ENCODE measurements at regions of chr7 and their contacts with region 1.

Region 1: GRCh38 chr7:100586266-100587025 is at the start of gene FBXO24:
- DNase-seq: peak; percentile 99 to 100
- ATAC-seq: peak; percentile 78 to 94 (median 84)
- H3K4me3 ChIP-seq: peak within 1 kb of the TSS; percentile 97
- H3K4me3 Mint-ChIP-seq: peak within 1 kb of the TSS; percentile 97
- H3K27ac ChIP-seq: peak within 1 kb of the TSS; percentile 92
- H3K27ac Mint-ChIP-seq: peak within 1 kb of the TSS; percentile 89 to 92
- H3K4me1 ChIP-seq: peaks cover 45% of the 10 kb centered on the region
- H3K4me1 Mint-ChIP-seq: peaks cover 19 to 34% of the 10 kb centered on the region in 2 donors
- H3K27me3 ChIP-seq: peaks cover 3% of the 10 kb centered on the region
- H3K27me3 Mint-ChIP-seq: peaks cover 7 to 14% of the 10 kb centered on the region in 2 donors
- CTCF ChIP-seq: no peak
- total RNA-seq, gene FBXO24: 0.45 to 0.94 (median 0.88) TPM

Region 2: GRCh38 chr7:100396421-100396982 is 189.9 kb before region 1 on chr7:
- intact Hi-C with region 1: no loop called
- DNase-seq: peak in 1 of 2 donors; percentile 70
- ATAC-seq: peak; percentile 90 to 94 (median 91)
- H3K4me3 ChIP-seq: no peak overlapping the region
- H3K4me3 Mint-ChIP-seq: peak overlapping the region; percentile 93
- H3K27ac ChIP-seq: peak overlapping the region; percentile 65
- H3K27ac Mint-ChIP-seq: peak overlapping the region; percentile 94 to 98
- H3K4me1 ChIP-seq: peaks cover 22% of the 10 kb centered on the region
- H3K4me1 Mint-ChIP-seq: peaks cover 22 to 28% of the 10 kb centered on the region in 2 donors
- H3K27me3 ChIP-seq: no peaks in the 10 kb centered on the region
- H3K27me3 Mint-ChIP-seq: no peaks in the 10 kb centered on the region
- CTCF ChIP-seq: no peak

Region 3: DNA sequence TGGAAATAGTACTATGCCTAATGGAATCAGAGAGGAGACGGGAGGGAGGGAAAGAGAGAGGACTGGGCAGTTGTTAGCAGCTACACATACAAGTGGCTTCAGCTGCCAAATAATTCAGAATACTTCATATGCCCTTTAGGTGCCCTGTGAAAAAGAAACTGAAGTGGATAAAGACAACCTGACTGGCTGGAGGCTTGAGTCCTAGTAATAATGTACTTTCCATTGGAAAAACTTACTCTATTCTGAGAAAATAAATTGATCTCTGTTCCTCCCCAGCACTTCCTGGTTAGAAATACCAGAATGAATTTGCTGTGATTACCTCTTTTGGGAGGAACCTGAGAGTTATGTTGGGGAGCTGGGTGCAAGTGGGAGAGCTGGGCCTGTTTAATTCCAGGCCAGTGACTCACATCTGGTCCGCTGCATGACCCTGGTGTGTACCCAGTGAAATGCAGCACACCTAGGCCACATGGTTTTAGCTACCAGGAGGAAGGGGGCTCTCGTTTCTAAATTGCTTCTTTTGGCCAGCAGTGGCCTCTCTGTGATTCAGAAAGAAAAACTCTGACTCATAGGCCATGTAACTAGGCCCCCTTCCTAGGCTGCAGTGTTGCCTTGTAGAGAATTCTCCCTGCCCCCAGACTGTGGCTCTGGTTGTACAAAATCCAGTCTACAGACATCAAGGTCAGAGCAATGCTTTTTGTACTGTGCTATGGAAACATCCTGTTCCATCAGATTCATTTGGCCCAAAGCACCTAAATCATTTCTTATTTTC is 40.9 kb before region 1 on chr7:
- intact Hi-C with region 1: loop called (anchors 5 kb)
- DNase-seq: peak in 1 of 2 donors; percentile 59
- ATAC-seq: peak; percentile 28 to 72 (median 55)
- H3K4me3 ChIP-seq: no peak overlapping the region
- H3K4me3 Mint-ChIP-seq: peak overlapping the region; percentile 88
- H3K27ac ChIP-seq: peak overlapping the region; percentile 76
- H3K27ac Mint-ChIP-seq: peak overlapping the region; percentile 94 to 95
- H3K4me1 ChIP-seq: peaks cover 80% of the 10 kb centered on the region
- H3K4me1 Mint-ChIP-seq: peaks cover 80 to 85% of the 10 kb centered on the region in 2 donors
- H3K27me3 ChIP-seq: no peaks in the 10 kb centered on the region
- H3K27me3 Mint-ChIP-seq: no peaks in the 10 kb centered on the region
- CTCF ChIP-seq: no peak

Region 4: GRCh38 chr7:100568896-100569844 is 17.3 kb before region 1 on chr7:
- intact Hi-C with region 1: no loop called
- DNase-seq: peak; percentile 43 to 72
- ATAC-seq: peak; percentile 27 to 31 (median 28)
- H3K4me3 ChIP-seq: peak overlapping the region; percentile 33
- H3K4me3 Mint-ChIP-seq: peak overlapping the region; percentile 28
- H3K27ac ChIP-seq: peak overlapping the region; percentile 34
- H3K27ac Mint-ChIP-seq: peak overlapping the region; percentile 58 to 62
- H3K4me1 ChIP-seq: peaks cover 42% of the 10 kb centered on the region
- H3K4me1 Mint-ChIP-seq: peaks cover 10 to 40% of the 10 kb centered on the region in 2 donors
- H3K27me3 ChIP-seq: no peaks in the 10 kb centered on the region
- H3K27me3 Mint-ChIP-seq: no peaks in the 10 kb centered on the region
- CTCF ChIP-seq: no peak

Region 5: GRCh38 chr7:100604028-100604975 is 17.9 kb after region 1 on chr7:
- intact Hi-C with region 1: loop called (anchors 1 kb)
- DNase-seq: peak; percentile 77 to 84
- ATAC-seq: peak; percentile 77 to 82 (median 78)
- H3K4me3 ChIP-seq: peak overlapping the region; percentile 59
- H3K4me3 Mint-ChIP-seq: peak overlapping the region; percentile 94
- H3K27ac ChIP-seq: peak overlapping the region; percentile 86
- H3K27ac Mint-ChIP-seq: peak overlapping the region; percentile 89 to 94
- H3K4me1 ChIP-seq: peaks cover 29% of the 10 kb centered on the region
- H3K4me1 Mint-ChIP-seq: peaks cover 16 to 23% of the 10 kb centered on the region in 2 donors
- H3K27me3 ChIP-seq: no peaks in the 10 kb centered on the region
- H3K27me3 Mint-ChIP-seq: no peaks in the 10 kb centered on the region
- CTCF ChIP-seq: peak; percentile 69

Region 6: DNA sequence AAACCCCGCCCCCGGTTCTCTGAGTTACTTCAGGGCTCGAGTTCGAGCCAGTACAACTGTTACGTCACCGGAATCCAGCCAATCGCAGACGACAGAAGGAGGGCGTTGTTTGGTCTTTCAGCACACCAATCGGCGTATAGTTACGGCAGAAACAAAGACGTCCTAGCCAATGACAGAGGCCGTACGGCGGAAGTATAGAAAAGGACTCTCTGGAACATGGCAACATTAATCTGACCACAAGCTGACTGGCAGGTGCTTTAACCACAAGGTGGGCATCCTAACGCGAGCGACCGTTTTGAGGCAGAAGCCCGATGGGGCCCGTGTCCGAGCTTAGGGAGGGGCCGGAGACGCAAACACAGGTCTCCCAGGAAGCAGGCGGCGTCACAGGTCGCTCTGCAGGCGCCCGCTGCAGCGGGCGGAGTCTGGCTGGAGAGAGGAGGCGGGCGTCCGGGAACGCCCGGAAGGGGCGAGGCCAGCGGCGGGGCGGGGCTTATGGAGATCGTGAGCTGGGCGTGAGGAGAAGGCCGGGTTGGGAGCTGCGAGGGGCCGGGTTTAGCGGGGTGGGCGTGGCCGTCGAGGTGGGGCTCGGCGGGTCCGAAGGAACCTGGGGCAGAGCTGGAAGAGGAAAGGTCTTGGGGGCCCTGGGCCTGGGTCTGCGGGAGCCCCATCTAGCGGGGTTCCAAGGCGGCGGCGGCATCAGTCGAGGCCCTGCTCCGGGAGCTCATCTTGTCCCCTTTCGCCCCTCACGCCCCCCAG is 25.7 kb after region 1 on chr7 and contains the start of gene MOSPD3:
- intact Hi-C with region 1: loop called (anchors 1 kb)
- DNase-seq: peak; percentile 98 to 99
- ATAC-seq: peak; percentile 91 to 97 (median 91)
- H3K4me3 ChIP-seq: peak within 1 kb of the TSS; percentile 91
- H3K4me3 Mint-ChIP-seq: peak within 1 kb of the TSS; percentile 99
- H3K27ac ChIP-seq: peak within 1 kb of the TSS; percentile 91
- H3K27ac Mint-ChIP-seq: peak within 1 kb of the TSS; percentile 99
- H3K4me1 ChIP-seq: peaks cover 23% of the 10 kb centered on the region
- H3K4me1 Mint-ChIP-seq: peaks cover 16 to 27% of the 10 kb centered on the region in 2 donors
- H3K27me3 ChIP-seq: no peaks in the 10 kb centered on the region
- H3K27me3 Mint-ChIP-seq: no peaks in the 10 kb centered on the region
- CTCF ChIP-seq: no peak
- total RNA-seq, gene MOSPD3: 14.5 to 15.9 (median 15.5) TPM

Region 7: DNA sequence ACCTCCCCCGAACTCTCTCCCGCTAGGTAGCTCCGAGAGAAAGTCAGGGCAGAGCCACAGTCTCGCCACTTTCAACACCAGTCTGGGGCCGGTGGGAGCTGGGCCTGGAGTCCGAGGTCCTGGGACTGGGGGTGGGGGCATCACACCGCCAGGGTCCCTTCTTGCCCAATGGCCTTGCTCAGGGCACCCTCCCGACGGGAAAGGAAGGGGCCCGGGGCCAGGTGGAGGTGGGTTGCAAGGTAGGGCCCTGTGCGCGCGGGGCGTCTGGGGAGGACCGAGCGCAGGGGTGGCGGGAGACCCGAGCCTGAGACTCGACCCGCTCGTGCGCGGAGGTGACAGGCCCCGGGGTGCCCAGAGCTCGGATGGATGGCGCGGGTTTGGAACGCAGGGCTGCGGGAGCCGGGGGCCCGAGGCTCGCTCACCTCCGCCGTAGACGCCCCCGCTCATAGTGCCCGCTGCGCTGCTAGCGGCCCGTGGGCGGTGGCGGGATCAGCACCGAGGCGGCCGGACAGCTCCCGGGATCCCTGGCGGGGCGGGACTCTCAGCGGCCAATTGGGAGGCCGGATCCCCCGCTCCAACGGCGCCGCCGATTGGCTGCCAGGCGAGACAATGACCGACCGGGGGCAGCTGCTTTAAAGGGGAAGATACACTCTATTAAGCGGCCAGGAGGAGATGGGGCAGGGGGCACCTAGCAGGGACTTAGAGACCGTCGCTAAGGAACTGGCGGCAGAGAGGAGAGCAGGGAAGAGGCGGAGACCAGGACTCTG is 69.6 kb after region 1 on chr7 and contains the start of gene ACTL6B:
- intact Hi-C with region 1: no loop called
- DNase-seq: peak; percentile 61 to 63
- ATAC-seq: peak; percentile 68 to 97 (median 93)
- H3K4me3 ChIP-seq: no peak within 1 kb of the TSS
- H3K4me3 Mint-ChIP-seq: no peak within 1 kb of the TSS
- H3K27ac ChIP-seq: no peak within 1 kb of the TSS
- H3K27ac Mint-ChIP-seq: no peak within 1 kb of the TSS
- H3K4me1 ChIP-seq: peaks cover 6% of the 10 kb centered on the region
- H3K4me1 Mint-ChIP-seq: no peaks in the 10 kb centered on the region
- H3K27me3 ChIP-seq: peaks cover 29% of the 10 kb centered on the region
- H3K27me3 Mint-ChIP-seq: peaks cover 30 to 33% of the 10 kb centered on the region in 2 donors
- CTCF ChIP-seq: no peak
- total RNA-seq, gene ACTL6B: not detected

Region 8: GRCh38 chr7:100789055-100789454 is 202.6 kb after region 1 on chr7:
- intact Hi-C with region 1: no loop called
- DNase-seq: no peak
- ATAC-seq: no peak
- H3K4me3 ChIP-seq: no peak overlapping the region
- H3K4me3 Mint-ChIP-seq: no peak overlapping the region
- H3K27ac ChIP-seq: no peak overlapping the region
- H3K27ac Mint-ChIP-seq: no peak overlapping the region
- H3K4me1 ChIP-seq: no peaks in the 10 kb centered on the region
- H3K4me1 Mint-ChIP-seq: peaks cover 5 to 7% of the 10 kb centered on the region in 2 donors
- H3K27me3 ChIP-seq: no peaks in the 10 kb centered on the region
- H3K27me3 Mint-ChIP-seq: peaks cover 6 to 11% of the 10 kb centered on the region in 2 donors
- CTCF ChIP-seq: no peak

Measured in natural killer cell (primary cell).